ENCODE measurements at regions of chr1 and their contacts with region 1.

Region 1: DNA sequence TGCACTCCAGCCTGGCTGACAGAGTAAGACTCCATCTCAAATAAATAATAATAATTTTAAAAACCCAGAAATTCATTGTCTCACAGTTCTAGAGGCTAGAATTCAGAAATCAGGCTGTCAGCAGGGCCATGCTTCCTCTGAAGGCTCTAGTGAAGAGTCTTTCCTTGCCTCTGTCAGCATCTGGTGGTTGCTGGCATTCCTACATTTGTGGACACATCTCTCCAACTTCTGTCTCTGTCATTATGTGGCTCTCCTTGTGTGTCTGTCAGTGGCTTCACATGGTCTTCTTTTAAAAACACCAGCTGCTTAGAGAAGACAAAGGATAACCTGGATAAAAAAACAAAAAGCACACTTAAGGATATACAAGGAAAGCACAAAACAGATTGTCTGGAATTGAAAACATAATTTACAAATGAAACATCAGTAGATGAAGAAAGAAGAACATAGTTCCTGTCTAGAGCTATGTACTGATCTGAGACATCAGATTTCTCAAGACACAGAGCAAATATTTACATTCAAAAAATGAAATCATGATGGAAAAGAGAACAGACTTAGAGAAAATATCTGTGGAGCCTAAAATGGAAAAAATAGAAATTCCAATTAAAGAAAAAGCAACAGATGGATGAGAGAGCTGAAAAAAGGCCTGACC is 32.7 kb upstream of the ASB17 start:
- DNase-seq: no peak
- ATAC-seq: peak; percentile 59
- H3K4me3 ChIP-seq: no peak overlapping the region
- H3K27ac ChIP-seq: no peak overlapping the region
- H3K4me1 ChIP-seq: peaks cover 9 to 15% of the 10 kb centered on the region in 2 experiments
- H3K27me3 ChIP-seq: no peaks in the 10 kb centered on the region
- CTCF ChIP-seq: no peak
- POLR2A ChIP-seq: no peak
- RAD21 ChIP-seq: no peak

Region 2: DNA sequence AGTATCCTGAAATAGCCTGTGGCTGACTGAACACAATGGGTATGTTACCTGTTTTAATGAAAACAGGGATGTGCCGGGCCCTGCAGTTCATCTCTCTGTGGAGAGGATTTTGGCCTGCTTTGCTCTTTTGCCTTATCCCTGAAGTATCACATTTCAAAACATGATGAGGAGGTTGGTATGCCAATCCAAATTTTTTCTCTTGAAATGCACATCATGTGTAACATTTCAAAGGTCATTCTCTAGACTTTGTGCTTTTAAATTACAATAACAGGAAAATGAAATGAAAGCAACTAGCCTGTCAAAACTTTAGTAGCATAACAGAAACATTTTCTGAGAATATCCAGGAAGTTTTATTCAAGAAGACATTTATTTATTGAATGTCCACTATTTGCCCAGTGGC is 472.9 kb before region 1 on chr1:
- CTCF ChIA-PET with region 1: no interaction called
- POLR2A ChIA-PET with region 1: no interaction called
- RAD21 ChIA-PET with region 1: no interaction called
- intact Hi-C with region 1: no loop called
- DNase-seq: no peak
- ATAC-seq: no peak
- H3K4me3 ChIP-seq: no peak overlapping the region
- H3K27ac ChIP-seq: no peak overlapping the region
- H3K4me1 ChIP-seq: no peaks in the 10 kb centered on the region
- H3K27me3 ChIP-seq: no peaks in the 10 kb centered on the region
- CTCF ChIP-seq: no peak
- POLR2A ChIP-seq: no peak
- RAD21 ChIP-seq: no peak

Region 3: GRCh38 chr1:75796376-75797272 is 168.3 kb before region 1 on chr1 and contains the start of gene MSH4:
- CTCF ChIA-PET with region 1: no interaction called
- POLR2A ChIA-PET with region 1: no interaction called
- RAD21 ChIA-PET with region 1: no interaction called
- intact Hi-C with region 1: no loop called
- DNase-seq: no peak
- ATAC-seq: peak; percentile 41
- H3K4me3 ChIP-seq: no peak within 1 kb of the TSS
- H3K27ac ChIP-seq: no peak within 1 kb of the TSS
- H3K4me1 ChIP-seq: no peaks in the 10 kb centered on the region
- H3K27me3 ChIP-seq: no peaks in the 10 kb centered on the region
- CTCF ChIP-seq: no peak
- POLR2A ChIP-seq: no peak
- RAD21 ChIP-seq: no peak
- total RNA-seq, gene MSH4: 1.7 TPM

Region 4: GRCh38 chr1:75985827-75986226 is 20.9 kb after region 1 on chr1:
- CTCF ChIA-PET with region 1: interaction called, 3 read pairs
- POLR2A ChIA-PET with region 1: no interaction called
- RAD21 ChIA-PET with region 1: no interaction called
- intact Hi-C with region 1: loop called (anchors 2 kb)
- DNase-seq: no peak
- ATAC-seq: no peak
- H3K4me3 ChIP-seq: no peak overlapping the region
- H3K27ac ChIP-seq: no peak overlapping the region
- H3K4me1 ChIP-seq: no peaks in the 10 kb centered on the region
- H3K27me3 ChIP-seq: peaks cover 12% of the 10 kb centered on the region
- CTCF ChIP-seq: no peak
- POLR2A ChIP-seq: no peak
- RAD21 ChIP-seq: no peak